Caco-2 (cell line): ENCODE measurements at regions of chr12 and their contacts with region 1.

Region 1: GRCh38 chr12:51678086-51678724 is 87.2 kb downstream of the SCN8A start:
- DNase-seq: peak; percentile 64 to 77
- H3K4me3 ChIP-seq: no peak overlapping the region
- H3K4me3 Mint-ChIP-seq: no peak overlapping the region
- H3K27ac Mint-ChIP-seq: no peak overlapping the region
- H3K4me1 ChIP-seq: 0 out of 2 replicates have a peak, but pooled peaks cover 4% of the 10 kb centered on the region
- H3K4me1 Mint-ChIP-seq: peaks cover 14% of the 10 kb centered on the region
- H3K27me3 ChIP-seq: no peaks in the 10 kb centered on the region
- H3K27me3 Mint-ChIP-seq: no peaks in the 10 kb centered on the region
- CTCF ChIP-seq: peak; percentile 86 to 94

Region 2: GRCh38 chr12:51626115-51626514 is 52.1 kb before region 1 on chr12:
- CTCF ChIA-PET with region 1: no interaction called
- POLR2A ChIA-PET with region 1: no interaction called
- intact Hi-C with region 1: loop called (anchors 5 kb)
- DNase-seq: peak in 1 of 2 experiments; percentile 6
- H3K4me3 ChIP-seq: no peak overlapping the region
- H3K4me3 Mint-ChIP-seq: no peak overlapping the region
- H3K27ac Mint-ChIP-seq: no peak overlapping the region
- H3K4me1 ChIP-seq: peaks cover 7% of the 10 kb centered on the region
- H3K4me1 Mint-ChIP-seq: peaks cover 26% of the 10 kb centered on the region
- H3K27me3 ChIP-seq: no peaks in the 10 kb centered on the region
- H3K27me3 Mint-ChIP-seq: no peaks in the 10 kb centered on the region
- CTCF ChIP-seq: no peak

Region 3: DNA sequence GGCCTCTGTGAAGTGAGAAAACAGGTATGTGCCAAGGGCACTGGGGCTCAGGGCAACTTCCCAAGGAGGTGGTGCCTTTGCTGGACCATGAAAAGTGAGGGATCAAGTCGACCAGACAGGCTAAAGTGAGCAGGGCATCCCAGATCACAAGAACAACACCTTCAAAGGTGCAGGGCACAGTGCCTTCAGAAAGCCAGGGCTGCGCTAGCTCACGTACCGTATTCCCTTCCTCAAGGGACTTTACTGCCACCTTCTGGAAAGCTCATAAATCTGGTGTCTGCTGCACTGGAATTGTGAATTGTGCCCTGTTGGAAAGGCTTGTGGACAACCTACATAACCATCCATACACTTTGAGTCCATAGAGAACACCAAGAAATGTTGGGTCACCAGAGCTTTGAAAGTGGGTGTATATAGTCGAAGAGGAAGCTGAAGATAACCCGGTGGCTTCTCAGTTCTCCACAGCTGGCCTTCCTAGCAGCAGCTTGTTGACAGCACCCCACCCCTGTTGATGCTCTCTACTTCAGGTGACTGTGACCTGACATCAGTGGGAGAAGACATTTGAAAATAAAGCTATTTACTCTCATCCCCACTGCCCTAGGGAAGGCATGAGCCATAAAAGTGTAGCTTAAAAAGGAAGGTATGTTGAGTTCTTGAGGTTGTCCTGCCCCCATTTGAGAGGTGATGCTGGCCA is 145.8 kb after region 1 on chr12:
- CTCF ChIA-PET with region 1: no interaction called
- POLR2A ChIA-PET with region 1: no interaction called
- intact Hi-C with region 1: no loop called
- DNase-seq: peak in 1 of 2 experiments; percentile 73
- H3K4me3 ChIP-seq: no peak overlapping the region
- H3K4me3 Mint-ChIP-seq: no peak overlapping the region
- H3K27ac Mint-ChIP-seq: no peak overlapping the region
- H3K4me1 ChIP-seq: 0 out of 2 replicates have a peak, but pooled peaks cover 4% of the 10 kb centered on the region
- H3K4me1 Mint-ChIP-seq: no peaks in the 10 kb centered on the region
- H3K27me3 ChIP-seq: no peaks in the 10 kb centered on the region
- H3K27me3 Mint-ChIP-seq: no peaks in the 10 kb centered on the region
- CTCF ChIP-seq: peak; percentile 66 to 67